Activated CD4-positive, alpha-beta T cell treated with anti-CD3 and anti-CD28 coated beads for 36 hours (primary cell): ENCODE measurements at regions of chr19 and their contacts with region 1.

Region 1: GRCh38 chr19:1863726-1864480 is 524 bp upstream of the KLF16 start:
- DNase-seq: peak; percentile 97
- ATAC-seq: peak; percentile 75
- H3K4me3 Mint-ChIP-seq: peak overlapping the region; percentile 68
- H3K27ac Mint-ChIP-seq: peak overlapping the region; percentile 72
- H3K4me1 Mint-ChIP-seq: peaks cover 37% of the 10 kb centered on the region
- H3K27me3 Mint-ChIP-seq: no peaks in the 10 kb centered on the region

Region 2: DNA sequence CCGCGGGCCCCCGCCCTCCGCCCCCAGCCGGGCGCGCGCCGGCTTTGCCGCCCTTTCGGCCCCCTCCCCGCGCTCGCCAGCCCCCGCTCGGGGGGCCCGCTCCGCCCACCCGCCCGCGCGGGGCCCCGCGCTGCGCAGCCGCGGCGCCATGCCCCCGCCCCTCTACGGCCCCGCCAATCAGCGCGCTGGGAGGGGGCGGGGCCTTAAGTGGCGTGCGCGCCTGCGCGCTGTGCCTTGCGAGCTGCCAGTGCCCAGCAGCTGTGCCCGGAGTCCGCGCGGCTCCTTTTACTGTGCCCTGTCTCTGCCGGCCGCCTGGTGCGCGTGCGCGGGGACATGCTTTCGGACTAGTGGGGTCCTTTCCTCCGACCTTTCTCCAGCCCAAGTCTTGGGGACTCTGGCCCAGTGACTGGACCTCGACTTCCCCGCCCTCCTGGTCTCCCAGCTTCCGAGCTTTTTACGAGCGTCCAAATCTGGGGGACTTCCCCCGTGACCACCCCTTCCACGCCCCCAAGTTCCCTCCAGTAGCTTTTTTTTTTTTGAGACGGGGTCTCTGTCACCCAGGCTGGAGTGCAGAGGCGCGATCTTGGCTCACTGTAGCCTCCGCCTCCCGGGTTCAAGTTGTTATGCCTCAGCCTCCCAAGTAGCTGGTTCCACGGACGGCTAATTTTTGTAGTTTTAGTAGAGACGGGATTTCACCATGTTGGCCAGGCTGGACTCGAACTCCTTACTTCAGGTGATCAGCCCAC is 271.0 kb before region 1 on chr19 and contains the start of gene MBD3:
- CTCF ChIA-PET with region 1: no interaction called
- POLR2A ChIA-PET with region 1: no interaction called
- intact Hi-C with region 1: loop called in 1 of 2 experiments (anchors 5 kb)
- DNase-seq: peak; percentile 93
- ATAC-seq: peak; percentile 85
- H3K4me3 Mint-ChIP-seq: peak within 1 kb of the TSS; percentile 94
- H3K27ac Mint-ChIP-seq: peak within 1 kb of the TSS; percentile 93
- H3K4me1 Mint-ChIP-seq: peaks cover 20% of the 10 kb centered on the region
- H3K27me3 Mint-ChIP-seq: no peaks in the 10 kb centered on the region
- total RNA-seq, gene MBD3: 68.9 to 87.5 TPM

Region 3: DNA sequence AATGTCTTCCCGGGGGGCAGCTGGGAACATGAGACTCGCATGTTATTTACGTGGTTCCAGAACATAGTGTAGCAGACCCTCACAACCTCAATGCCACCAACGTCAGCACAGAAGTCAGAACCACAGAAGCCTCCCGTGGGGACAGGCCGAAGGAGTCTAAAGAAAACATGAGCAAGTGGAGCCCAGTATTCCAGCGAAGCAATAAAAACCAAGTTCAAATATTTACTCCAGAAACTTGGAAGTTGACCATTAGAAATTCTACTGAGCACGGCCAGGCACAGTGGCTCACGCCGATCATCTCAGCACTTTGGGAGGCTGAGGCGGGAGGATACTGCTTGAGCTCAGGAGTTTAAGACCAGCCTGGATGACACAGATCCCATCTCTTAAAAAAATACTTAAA is 33.9 kb before region 1 on chr19:
- CTCF ChIA-PET with region 1: no interaction called
- POLR2A ChIA-PET with region 1: no interaction called
- intact Hi-C with region 1: no loop called
- DNase-seq: no peak
- ATAC-seq: no peak
- H3K4me3 Mint-ChIP-seq: no peak overlapping the region
- H3K27ac Mint-ChIP-seq: no peak overlapping the region
- H3K4me1 Mint-ChIP-seq: no peaks in the 10 kb centered on the region
- H3K27me3 Mint-ChIP-seq: no peaks in the 10 kb centered on the region

Region 4: DNA sequence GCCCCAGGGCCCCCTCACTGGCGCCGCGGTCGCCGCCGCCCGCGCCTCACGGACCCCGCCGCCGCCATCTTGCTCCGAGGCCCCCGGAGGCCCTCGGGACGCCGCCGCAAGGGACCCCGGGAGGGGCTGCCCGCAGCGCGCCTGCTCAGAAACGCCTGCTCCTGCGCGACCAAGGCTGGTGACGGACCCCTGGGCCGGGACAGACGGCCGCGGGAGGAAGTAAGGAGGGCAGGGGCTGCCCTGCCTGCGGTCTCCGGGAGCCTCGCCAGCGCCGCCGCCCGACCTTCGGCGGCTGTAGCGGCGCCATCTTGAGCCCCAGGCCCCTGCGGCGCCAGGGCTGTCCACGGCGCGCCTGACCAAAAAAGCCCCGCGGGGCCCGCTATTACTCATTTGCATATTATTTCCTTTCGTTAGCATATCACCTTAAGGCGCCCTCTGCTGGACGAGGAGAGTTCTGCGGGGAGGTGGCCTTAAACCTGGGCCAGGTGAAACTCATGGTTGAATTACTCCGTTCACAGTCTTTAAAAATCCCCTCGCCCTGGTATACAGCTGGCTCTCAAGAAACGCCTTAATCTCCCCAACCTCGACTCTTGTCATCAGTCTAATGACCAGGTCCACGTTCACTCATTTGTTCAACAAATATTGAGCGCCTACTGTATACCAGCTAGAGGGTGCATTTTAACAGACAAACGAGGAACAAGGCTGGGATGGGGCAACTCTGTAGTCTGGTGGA is 15.3 kb before region 1 on chr19 and contains the start of gene REXO1:
- CTCF ChIA-PET with region 1: no interaction called
- POLR2A ChIA-PET with region 1: no interaction called
- intact Hi-C with region 1: loop called (anchors 1 to 2 kb)
- DNase-seq: peak; percentile 98
- ATAC-seq: peak; percentile 72
- H3K4me3 Mint-ChIP-seq: peak within 1 kb of the TSS; percentile 92
- H3K27ac Mint-ChIP-seq: peak within 1 kb of the TSS; percentile 88
- H3K4me1 Mint-ChIP-seq: peaks cover 65% of the 10 kb centered on the region
- H3K27me3 Mint-ChIP-seq: no peaks in the 10 kb centered on the region
- total RNA-seq, gene REXO1: 39.3 to 49.8 TPM

Region 5: GRCh38 chr19:1905071-1905862 is 41.4 kb after region 1 on chr19 and contains the starts of genes ADAT3 and SCAMP4:
- CTCF ChIA-PET with region 1: interaction called, 3 read pairs
- POLR2A ChIA-PET with region 1: no interaction called
- intact Hi-C with region 1: loop called (anchors 1 to 2 kb)
- DNase-seq: peak; percentile 100
- ATAC-seq: peak; percentile 98
- H3K4me3 Mint-ChIP-seq: peak within 1 kb of the TSS; percentile 84
- H3K27ac Mint-ChIP-seq: peak within 1 kb of the TSS; percentile 82
- H3K4me1 Mint-ChIP-seq: peaks cover 45% of the 10 kb centered on the region
- H3K27me3 Mint-ChIP-seq: no peaks in the 10 kb centered on the region
- total RNA-seq, gene ADAT3: 5.6 to 6.1 TPM
- total RNA-seq, gene SCAMP4: 20.5 to 25.6 TPM

Region 6: GRCh38 chr19:1956868-1957492 is 93.1 kb after region 1 on chr19:
- CTCF ChIA-PET with region 1: no interaction called
- POLR2A ChIA-PET with region 1: no interaction called
- intact Hi-C with region 1: no loop called
- DNase-seq: no peak
- ATAC-seq: no peak
- H3K4me3 Mint-ChIP-seq: no peak overlapping the region
- H3K27ac Mint-ChIP-seq: no peak overlapping the region
- H3K4me1 Mint-ChIP-seq: peaks cover 2% of the 10 kb centered on the region
- H3K27me3 Mint-ChIP-seq: no peaks in the 10 kb centered on the region

Region 7: DNA sequence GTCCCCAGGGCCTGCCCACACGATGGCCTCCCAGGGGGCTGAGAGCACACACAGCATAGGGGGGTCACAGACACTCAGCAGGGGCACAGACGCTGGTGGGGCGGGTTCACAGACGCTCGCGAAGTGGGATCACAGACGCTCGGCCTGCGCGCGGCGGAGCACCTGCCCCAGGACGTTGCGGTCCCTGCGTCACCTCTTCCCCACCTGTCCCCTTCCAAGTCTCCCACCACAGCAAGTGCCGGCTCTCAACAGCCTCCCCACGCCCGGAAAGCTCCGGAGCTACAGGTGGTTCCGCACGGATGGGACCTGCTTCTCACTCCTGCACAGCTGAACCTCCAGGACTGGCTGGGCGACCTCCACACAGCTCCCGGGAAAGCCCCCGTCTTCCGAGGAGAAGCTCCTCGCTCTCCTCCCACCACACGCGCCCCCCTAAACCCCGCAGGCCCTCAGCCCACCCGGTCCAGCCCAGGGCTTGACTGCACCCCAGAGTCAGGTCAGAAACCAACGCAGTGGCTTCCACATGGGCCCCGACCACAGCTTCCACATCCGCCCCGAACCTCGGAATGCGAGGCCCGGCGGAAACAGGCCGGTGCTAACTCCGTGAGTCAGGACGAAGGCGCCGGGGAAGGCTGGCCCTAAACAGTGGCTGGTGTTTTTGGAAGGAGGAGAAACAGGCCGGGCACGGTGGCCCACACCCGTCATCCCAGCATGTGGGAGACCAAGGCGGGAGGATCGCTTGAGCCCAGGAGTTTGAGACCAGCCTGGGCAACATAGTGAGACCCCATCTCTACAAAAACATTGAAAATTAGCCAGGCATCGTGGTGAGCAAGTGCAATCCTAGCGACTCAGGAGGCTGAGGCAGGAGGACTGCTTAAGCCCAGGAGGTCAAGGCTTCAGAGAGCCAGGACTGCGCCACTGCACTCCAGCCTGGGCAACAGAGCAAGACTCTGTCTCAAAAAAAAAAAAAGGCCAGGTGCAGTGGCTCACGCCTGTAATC is 135.1 kb after region 1 on chr19:
- CTCF ChIA-PET with region 1: no interaction called
- POLR2A ChIA-PET with region 1: no interaction called
- intact Hi-C with region 1: no loop called
- DNase-seq: no peak
- ATAC-seq: no peak
- H3K4me3 Mint-ChIP-seq: no peak overlapping the region
- H3K27ac Mint-ChIP-seq: no peak overlapping the region
- H3K4me1 Mint-ChIP-seq: peaks cover 2% of the 10 kb centered on the region
- H3K27me3 Mint-ChIP-seq: no peaks in the 10 kb centered on the region

Region 8: DNA sequence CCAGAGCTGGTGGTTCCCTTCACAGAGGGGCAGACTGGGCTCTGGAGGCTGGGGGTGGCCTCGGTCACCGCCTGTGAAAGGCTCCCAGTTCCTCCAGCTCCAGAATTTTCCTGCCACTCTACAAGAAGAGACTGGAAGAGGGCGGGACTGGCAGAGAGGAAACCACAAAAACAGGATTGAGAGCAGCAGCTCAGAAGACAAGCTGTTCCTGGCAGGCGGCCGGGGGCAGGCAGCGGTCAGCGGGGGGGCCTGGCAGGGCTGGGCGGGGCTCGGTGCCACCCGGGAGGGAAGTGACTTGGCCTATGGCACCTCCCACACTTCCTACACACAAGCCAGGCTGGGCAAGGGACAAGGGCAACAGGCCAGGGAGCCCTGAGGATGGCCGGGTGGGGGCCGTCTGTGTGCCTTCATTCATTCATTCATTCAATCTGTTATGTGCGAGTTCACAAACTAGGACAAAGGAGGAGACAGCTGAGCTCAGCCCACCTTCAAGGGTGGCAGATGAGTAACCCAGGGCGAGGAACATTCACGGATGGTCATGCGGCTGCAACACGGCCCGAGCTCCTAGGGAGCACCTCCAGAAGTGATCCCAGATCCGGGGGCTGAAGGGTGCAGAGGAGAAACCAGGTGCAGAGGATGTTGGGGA is 168.5 kb after region 1 on chr19:
- CTCF ChIA-PET with region 1: no interaction called
- POLR2A ChIA-PET with region 1: no interaction called
- intact Hi-C with region 1: no loop called
- DNase-seq: peak; percentile 74
- ATAC-seq: peak; percentile 57
- H3K4me3 Mint-ChIP-seq: peak overlapping the region; percentile 70
- H3K27ac Mint-ChIP-seq: peak overlapping the region; percentile 85
- H3K4me1 Mint-ChIP-seq: peaks cover 28% of the 10 kb centered on the region
- H3K27me3 Mint-ChIP-seq: no peaks in the 10 kb centered on the region

Region 9: DNA sequence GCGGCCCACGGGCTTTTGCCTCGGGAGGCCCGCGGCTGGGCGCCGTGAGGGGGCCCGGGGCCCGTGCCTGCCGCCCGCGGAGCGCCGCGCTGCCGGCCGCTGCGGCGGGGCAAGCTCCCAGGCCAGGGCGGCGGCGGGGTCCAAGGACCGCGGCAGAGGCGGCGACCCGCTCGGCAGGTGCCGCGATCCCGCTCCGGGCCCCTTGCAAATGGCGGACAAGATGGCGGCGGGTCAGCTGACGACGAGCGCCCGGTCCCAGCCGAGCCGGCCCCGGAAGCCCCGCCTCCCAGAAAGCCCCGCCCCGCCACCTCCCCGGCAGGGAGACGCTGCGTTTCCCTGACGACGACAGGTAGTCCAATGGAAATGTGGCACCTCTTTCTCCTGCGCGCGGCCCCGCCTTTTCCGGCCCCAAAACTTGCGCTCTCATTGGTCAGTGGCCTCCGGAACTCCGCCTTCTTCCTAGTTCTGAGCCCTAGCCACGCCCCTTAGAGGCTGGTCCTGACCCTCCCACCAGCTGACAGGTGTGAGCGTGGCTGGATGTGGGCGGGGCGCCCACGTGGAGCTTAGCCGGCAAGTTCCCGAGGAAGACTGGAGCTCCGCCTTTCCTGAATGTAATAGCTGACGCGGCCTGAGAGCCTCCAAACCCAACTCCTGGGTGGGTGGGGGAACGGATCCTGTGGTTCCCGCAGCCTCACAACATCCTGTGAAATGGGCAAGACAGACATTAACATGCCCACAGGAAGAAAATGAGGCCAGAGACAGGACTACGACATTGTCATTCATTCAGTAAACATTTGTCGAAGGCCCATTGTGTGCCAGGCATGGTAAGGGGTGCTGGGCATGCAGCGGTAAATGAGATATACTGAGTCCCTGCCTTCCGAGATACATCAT is 287.7 kb after region 1 on chr19 and contains the start of gene AP3D1:
- CTCF ChIA-PET with region 1: no interaction called
- POLR2A ChIA-PET with region 1: no interaction called
- intact Hi-C with region 1: loop called in 1 of 2 experiments (anchors 1 kb)
- DNase-seq: peak; percentile 100
- ATAC-seq: peak; percentile 90
- H3K4me3 Mint-ChIP-seq: peak within 1 kb of the TSS; percentile 81
- H3K27ac Mint-ChIP-seq: peak within 1 kb of the TSS; percentile 89
- H3K4me1 Mint-ChIP-seq: peaks cover 42% of the 10 kb centered on the region
- H3K27me3 Mint-ChIP-seq: no peaks in the 10 kb centered on the region
- total RNA-seq, gene AP3D1: 82.7 to 105 TPM